ENCODE measurements at regions of chr5 and their contacts with region 1.

Region 1: GRCh38 chr5:54243473-54244080 is 66.8 kb downstream of the ARL15 start:
- DNase-seq: peak in 1 of 2 experiments; percentile 1
- H3K4me3 ChIP-seq: no peak overlapping the region
- H3K27ac ChIP-seq: no peak overlapping the region
- H3K4me1 ChIP-seq: no peaks in the 10 kb centered on the region
- H3K27me3 ChIP-seq: no peaks in the 10 kb centered on the region
- CTCF ChIP-seq: peak; percentile 82

Region 2: GRCh38 chr5:54480296-54480695 is 236.7 kb after region 1 on chr5:
- CTCF ChIA-PET with region 1: no interaction called
- POLR2A ChIA-PET with region 1: no interaction called
- intact Hi-C with region 1: loop called (anchors 10 kb)
- DNase-seq: no peak
- H3K4me3 ChIP-seq: no peak overlapping the region
- H3K27ac ChIP-seq: no peak overlapping the region
- H3K4me1 ChIP-seq: no peaks in the 10 kb centered on the region
- H3K27me3 ChIP-seq: no peaks in the 10 kb centered on the region
- CTCF ChIP-seq: no peak

Region 3: DNA sequence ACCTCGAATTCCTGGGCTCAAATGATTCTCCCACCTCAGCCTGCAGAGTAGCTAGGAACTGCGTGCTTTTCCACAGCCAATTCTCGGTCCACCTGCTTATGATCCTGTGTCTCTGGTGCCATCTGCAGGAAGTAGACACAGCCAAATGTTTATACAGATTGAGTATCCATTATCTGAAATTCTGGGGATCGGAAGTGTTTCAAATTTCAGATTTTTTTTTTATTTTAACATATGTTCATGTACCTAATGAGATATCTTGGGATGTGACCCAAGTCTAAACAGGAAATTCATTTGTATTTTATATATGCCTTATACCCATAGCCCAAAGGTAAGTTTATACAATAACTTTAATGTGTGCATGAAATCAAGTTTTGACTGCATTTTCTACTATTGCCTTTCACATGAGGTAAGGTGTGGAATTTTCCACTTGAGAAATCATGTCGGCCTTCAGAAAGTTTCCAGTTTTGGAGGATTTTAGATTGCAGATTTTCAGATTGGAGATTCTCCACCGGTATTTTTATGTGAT is 652.3 kb after region 1 on chr5:
- CTCF ChIA-PET with region 1: no interaction called
- POLR2A ChIA-PET with region 1: no interaction called
- intact Hi-C with region 1: loop called (anchors 10 kb)
- DNase-seq: peak in 1 of 2 experiments; percentile 7
- H3K4me3 ChIP-seq: no peak overlapping the region
- H3K27ac ChIP-seq: no peak overlapping the region
- H3K4me1 ChIP-seq: peaks cover 8% of the 10 kb centered on the region; the same call in 1 of the 2 replicates
- H3K27me3 ChIP-seq: peaks cover 13% of the 10 kb centered on the region; the same call in 1 of the 2 replicates
- CTCF ChIP-seq: peak; percentile 75

Measured in PC-9 (cell line).